Heart left ventricle (tissue), 16 donors: ENCODE measurements at regions of chr20 and their contacts with region 1.

Region 1: GRCh38 chr20:34704177-34705007 is at the start of gene TP53INP2:
- DNase-seq: peak; percentile 95 to 98 (median 96)
- ATAC-seq: peak; percentile 79 to 87 (median 83)
- H3K4me3 ChIP-seq: peak within 1 kb of the TSS; percentile 65 to 94 (median 82)
- H3K27ac ChIP-seq: peak within 1 kb of the TSS; percentile 92 to 100 (median 99)
- H3K4me1 ChIP-seq: peaks cover 0 to 53% (median 36%) of the 10 kb centered on the region in 12 donors
- H3K27me3 ChIP-seq: peaks cover 0 to 5% (median 0%) of the 10 kb centered on the region in 9 donors
- CTCF ChIP-seq: peak in 1 of 12 donors; percentile 18
- POLR2A ChIP-seq: peak; percentile 69 to 94
- total RNA-seq, gene TP53INP2: 70.4 to 176 (median 111) TPM

Region 2: DNA sequence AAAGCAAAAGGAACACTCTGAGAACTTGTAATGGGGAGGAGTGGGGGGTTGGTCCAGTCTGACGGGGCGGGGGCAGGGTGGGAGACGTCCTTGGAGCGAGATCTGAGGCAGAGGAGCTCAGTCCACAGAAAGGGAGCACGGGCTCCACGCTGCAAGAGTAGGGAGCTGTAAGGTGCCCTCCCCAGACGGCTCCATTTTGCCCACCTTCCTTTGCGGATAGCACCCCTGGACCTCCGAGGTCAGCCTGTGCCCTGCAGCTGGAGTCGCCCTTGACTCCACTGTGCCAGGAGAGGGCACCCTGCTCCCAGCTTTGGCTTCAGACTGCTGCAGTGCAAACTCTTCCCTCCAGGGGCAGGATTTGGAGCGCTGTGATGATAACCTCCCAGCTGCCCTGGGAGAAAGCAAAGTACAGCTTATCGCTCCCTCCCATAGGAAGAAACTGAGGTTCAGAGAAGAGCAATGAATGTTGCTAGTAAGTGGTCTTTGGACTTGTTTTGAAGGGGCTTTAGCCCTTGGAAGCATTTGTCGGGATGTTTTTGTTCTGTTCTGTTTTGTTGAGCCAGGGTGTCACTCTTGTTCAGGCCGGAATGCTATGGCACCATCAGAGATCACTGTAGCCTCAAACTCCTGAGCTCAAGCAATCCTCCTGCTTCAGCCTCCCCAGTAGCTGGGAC is 391.7 kb before region 1 on chr20:
- intact Hi-C with region 1: loop called in 3 of 10 experiments (anchors 5 to 10 kb)
- DNase-seq: peak; percentile 83 to 90 (median 86)
- ATAC-seq: peak; percentile 93 to 99 (median 98)
- H3K4me3 ChIP-seq: peak overlapping the region in 7 of 12 donors; percentile 15 to 45 (median 33)
- H3K27ac ChIP-seq: no peak overlapping the region
- H3K4me1 ChIP-seq: peaks cover 0 to 20% (median 11%) of the 10 kb centered on the region in 12 donors
- H3K27me3 ChIP-seq: peaks cover 0 to 17% (median 0%) of the 10 kb centered on the region in 9 donors
- CTCF ChIP-seq: peak; percentile 97 to 100 (median 99)
- POLR2A ChIP-seq: no peak

Region 3: DNA sequence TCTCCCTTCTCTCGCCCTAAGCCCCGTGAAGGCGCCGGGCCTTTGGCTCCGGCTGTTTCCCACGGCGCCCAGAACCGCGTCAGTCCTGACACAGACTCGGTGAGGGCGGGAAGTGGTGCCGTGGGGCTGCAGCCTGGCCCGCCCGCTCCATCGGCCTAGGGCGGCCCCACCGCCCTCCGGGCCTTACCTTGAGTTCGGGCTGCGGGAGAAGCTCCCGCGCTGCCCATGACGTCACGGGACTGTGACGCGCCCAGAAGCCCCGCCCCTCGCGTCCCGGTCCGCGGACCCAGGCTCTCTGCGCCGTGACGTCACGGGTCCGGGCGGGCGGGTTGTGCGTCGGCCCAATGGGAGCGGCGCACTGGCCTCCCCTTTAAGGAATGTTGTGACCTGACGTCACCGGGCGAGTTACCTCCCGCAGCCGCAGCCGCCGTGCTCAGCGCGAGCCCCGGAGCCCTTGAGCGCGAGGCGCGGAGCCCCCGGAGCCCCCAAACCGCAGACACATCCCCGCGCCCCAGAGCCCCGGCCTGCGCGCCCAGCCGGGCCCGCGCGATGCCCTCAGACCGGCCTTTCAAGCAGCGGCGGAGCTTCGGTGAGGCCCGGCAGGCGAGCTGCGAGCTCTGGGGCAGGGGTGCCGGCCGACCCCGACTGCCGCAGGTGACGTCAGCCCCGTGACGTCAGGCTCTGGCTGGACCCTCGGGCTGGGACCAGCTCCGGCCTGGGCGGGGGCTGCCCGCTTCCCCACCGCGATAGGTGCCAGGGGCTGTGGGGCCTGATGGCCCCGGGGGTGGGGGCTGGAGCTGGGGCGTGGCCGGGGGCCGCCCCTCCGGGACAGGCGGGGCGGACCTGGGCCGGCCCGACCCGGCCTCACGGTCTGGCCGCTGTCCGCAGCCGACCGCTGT is 145.8 kb before region 1 on chr20 and contains the start of gene MAP1LC3A:
- intact Hi-C with region 1: loop called in 2 of 10 experiments (anchors 10 kb)
- DNase-seq: peak; percentile 96 to 98 (median 98)
- ATAC-seq: peak; percentile 87 to 96 (median 92)
- H3K4me3 ChIP-seq: peak within 1 kb of the TSS; percentile 57 to 98 (median 86)
- H3K27ac ChIP-seq: peak within 1 kb of the TSS; percentile 81 to 98 (median 94)
- H3K4me1 ChIP-seq: peaks cover 0 to 28% (median 10%) of the 10 kb centered on the region in 12 donors
- H3K27me3 ChIP-seq: no peaks in the 10 kb centered on the region
- CTCF ChIP-seq: no peak
- POLR2A ChIP-seq: peak; percentile 11 to 69
- total RNA-seq, gene MAP1LC3A: 54.0 to 212 (median 88.6) TPM

Region 4: DNA sequence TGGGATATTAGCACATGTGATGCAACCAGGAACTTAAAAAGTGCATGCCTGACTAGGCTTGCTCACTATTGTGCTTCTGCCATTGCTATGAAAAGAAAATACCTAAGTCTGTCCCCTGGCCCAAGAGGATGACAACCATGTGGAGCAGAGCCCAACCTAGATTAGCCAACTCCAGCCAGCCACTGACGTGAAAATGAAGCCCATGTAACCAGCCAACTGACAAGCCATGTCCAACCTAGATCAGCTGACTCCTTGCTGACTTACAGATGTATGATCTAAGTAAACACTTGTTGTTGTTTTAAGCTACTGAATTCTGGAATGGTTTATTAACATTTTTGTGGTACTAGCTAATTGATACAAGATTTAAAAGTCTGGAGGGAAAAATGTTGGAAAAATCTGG is 75.0 kb before region 1 on chr20:
- intact Hi-C with region 1: loop called in 2 of 10 experiments (anchors 2 kb)
- DNase-seq: peak in 4 of 5 donors; percentile 37 to 80 (median 62)
- ATAC-seq: peak; percentile 83 to 92 (median 90)
- H3K4me3 ChIP-seq: no peak overlapping the region
- H3K27ac ChIP-seq: peak overlapping the region; percentile 22 to 83 (median 58)
- H3K4me1 ChIP-seq: peaks cover 0 to 14% (median 4%) of the 10 kb centered on the region in 12 donors
- H3K27me3 ChIP-seq: no peaks in the 10 kb centered on the region
- CTCF ChIP-seq: no peak
- POLR2A ChIP-seq: no peak

Region 5: DNA sequence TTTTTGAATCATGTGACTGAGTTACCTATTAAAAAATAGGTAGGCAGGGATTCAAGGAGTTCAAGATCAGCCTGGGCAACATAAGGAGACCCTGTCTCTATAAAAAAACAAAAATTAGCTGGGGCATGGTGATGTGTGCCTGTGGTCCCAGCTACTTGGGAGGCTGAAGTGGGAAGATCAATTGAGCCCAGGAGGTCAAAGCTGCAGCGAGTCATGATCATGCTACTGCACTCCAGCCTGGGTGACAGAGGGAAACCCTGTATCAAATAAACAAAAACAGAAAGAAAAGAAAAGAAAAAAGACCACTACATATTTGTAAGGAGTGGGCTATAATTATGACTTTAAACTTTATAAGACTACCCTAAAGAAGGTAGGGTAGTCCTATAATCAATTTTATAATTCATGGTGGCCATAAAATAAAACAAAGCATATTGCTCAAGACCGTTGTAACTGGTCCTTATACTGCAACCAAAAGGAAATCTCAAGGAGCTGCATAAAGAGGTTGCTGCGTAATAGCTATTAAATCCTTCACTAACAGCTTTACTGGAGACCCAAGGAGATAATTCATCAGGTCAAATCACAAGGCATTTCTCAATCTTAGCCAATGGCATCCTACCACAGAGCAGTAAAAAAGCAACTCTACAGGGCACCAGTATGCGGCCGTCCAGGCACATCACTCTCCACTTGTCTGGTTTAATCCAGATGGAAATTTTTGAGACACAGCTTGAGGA is 41.0 kb before region 1 on chr20:
- intact Hi-C with region 1: no loop called
- DNase-seq: no peak
- ATAC-seq: no peak
- H3K4me3 ChIP-seq: no peak overlapping the region
- H3K27ac ChIP-seq: no peak overlapping the region
- H3K4me1 ChIP-seq: no peaks in the 10 kb centered on the region
- H3K27me3 ChIP-seq: no peaks in the 10 kb centered on the region
- CTCF ChIP-seq: no peak
- POLR2A ChIP-seq: no peak